AG04450 (cell line): ENCODE measurements at regions of chr9 and their contacts with region 1.

Region 1: GRCh38 chr9:98998441-98999151 is 54.9 kb downstream of the COL15A1 start:
- DNase-seq: no peak
- H3K4me3 ChIP-seq: no peak overlapping the region
- H3K27ac ChIP-seq: no peak overlapping the region
- H3K27me3 ChIP-seq: peaks cover 33% of the 10 kb centered on the region
- CTCF ChIP-seq: peak; percentile 92

Region 2: GRCh38 chr9:98848450-98849149 is 150.0 kb before region 1 on chr9:
- CTCF ChIA-PET with region 1: interaction called, 86 read pairs
- POLR2A ChIA-PET with region 1: no interaction called
- DNase-seq: peak; percentile 90
- H3K4me3 ChIP-seq: peak overlapping the region; percentile 11
- H3K27ac ChIP-seq: peak overlapping the region; percentile 32
- H3K27me3 ChIP-seq: peaks cover 15% of the 10 kb centered on the region
- CTCF ChIP-seq: peak; percentile 96

Region 3: DNA sequence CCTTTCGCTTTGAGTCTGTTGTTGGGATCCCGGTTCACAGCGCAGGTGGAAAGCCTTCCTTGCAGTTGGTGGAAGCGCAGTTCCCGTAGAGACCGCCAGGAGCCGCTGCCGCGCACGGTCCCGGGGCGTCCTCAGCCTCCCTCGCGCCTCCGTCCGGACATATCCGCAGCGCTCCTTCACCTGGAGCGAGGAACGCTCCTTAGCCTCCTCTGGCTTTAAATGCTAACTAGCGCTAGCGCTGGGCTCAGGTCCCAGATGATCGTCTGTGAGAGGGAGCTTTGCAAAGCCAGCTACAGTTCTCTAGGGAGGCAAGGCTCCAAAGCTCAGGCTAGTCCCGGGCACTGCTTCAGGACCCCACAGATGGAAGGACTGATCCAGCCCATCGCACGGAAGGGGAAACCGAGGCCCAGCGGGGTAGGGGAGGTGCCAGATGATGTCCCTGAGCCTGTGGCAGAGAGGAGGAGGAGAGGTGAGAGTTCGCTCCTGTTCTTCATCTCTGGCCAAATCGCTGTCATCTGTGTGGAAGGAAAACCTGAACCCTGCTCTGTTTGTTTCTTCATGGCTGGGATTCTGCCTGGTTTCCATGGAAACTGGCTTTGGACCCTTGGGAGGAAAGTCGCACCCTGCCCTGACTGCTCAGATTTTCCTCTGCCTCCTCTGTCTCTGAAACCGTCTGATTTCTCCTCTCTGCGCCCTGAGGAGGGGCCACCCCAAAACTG is 23.4 kb before region 1 on chr9:
- CTCF ChIA-PET with region 1: interaction called, 31 read pairs
- POLR2A ChIA-PET with region 1: interaction called, 4 read pairs
- DNase-seq: peak; percentile 34
- H3K4me3 ChIP-seq: peak overlapping the region; percentile 48
- H3K27ac ChIP-seq: peak overlapping the region; percentile 11
- H3K27me3 ChIP-seq: peaks cover 21% of the 10 kb centered on the region
- CTCF ChIP-seq: peak; percentile 99

Region 4: GRCh38 chr9:99019790-99020331 is 21.3 kb after region 1 on chr9:
- CTCF ChIA-PET with region 1: interaction called, 18 read pairs
- POLR2A ChIA-PET with region 1: no interaction called
- DNase-seq: peak; percentile 94
- H3K4me3 ChIP-seq: no peak overlapping the region
- H3K27ac ChIP-seq: peak overlapping the region; percentile 99
- H3K27me3 ChIP-seq: no peaks in the 10 kb centered on the region
- CTCF ChIP-seq: no peak

Region 5: DNA sequence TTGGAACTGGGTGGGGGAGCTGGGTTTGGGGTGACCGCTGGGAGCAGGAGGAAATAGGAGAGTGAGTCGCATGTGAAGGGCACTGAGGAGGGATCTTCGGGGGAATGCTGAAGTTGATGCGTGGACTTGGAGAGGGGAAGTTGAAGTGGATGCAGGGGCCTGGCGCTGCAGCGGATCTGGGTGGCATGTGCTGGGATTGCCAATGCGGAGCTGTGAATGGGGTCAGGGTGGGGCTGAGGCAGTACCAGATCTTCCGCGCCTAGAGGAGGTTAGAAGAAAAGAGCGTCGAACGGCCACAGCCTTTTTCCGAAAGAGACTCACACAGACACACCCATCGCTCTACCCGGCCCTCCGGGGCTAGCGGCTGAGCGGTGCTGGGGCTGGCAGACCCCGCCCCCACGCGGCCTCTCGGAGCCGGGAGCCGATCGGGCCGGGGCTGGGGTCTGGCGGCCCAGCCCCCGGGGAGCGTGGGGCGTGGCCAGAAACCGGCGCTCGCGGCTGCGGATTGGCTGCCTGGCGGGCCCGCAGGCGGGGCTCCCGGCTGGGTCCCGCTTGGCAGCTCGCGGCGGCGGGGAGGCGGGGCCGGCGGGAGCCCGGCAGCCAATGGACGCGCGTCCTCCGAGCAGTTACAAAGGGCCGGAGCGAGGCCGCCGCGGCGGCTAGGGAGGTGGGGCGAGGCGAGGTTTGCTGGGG is 106.0 kb after region 1 on chr9 and contains the start of gene TGFBR1:
- CTCF ChIA-PET with region 1: interaction called, 10 read pairs
- POLR2A ChIA-PET with region 1: interaction called, 4 read pairs
- DNase-seq: no peak
- H3K4me3 ChIP-seq: peak within 1 kb of the TSS; percentile 73
- H3K27ac ChIP-seq: peak within 1 kb of the TSS; percentile 89
- H3K27me3 ChIP-seq: no peaks in the 10 kb centered on the region
- CTCF ChIP-seq: 0 out of 2 replicates have a peak, but pooled peaks have one; percentile 5
- polyA plus RNA-seq, gene TGFBR1: 86.3 and 96.6 TPM in 2 replicates

Region 6: GRCh38 chr9:99150451-99151171 is 152.0 kb after region 1 on chr9:
- CTCF ChIA-PET with region 1: interaction called, 11 read pairs
- POLR2A ChIA-PET with region 1: no interaction called
- DNase-seq: no peak
- H3K4me3 ChIP-seq: no peak overlapping the region
- H3K27ac ChIP-seq: no peak overlapping the region
- H3K27me3 ChIP-seq: no peaks in the 10 kb centered on the region
- CTCF ChIP-seq: no peak